ENCODE measurements at regions of chr5 and their contacts with region 1.

Region 1: GRCh38 chr5:172006321-172007174 is at the start of gene FBXW11:
- DNase-seq: peak; percentile 78
- H3K4me3 ChIP-seq: peak within 1 kb of the TSS; percentile 87
- CTCF ChIP-seq: no peak

Region 2: GRCh38 chr5:172028167-172028566 is 21.6 kb after region 1 on chr5:
- CTCF ChIA-PET with region 1: interaction called, 10 read pairs
- POLR2A ChIA-PET with region 1: no interaction called
- DNase-seq: no peak
- H3K4me3 ChIP-seq: no peak overlapping the region
- CTCF ChIP-seq: no peak

Region 3: DNA sequence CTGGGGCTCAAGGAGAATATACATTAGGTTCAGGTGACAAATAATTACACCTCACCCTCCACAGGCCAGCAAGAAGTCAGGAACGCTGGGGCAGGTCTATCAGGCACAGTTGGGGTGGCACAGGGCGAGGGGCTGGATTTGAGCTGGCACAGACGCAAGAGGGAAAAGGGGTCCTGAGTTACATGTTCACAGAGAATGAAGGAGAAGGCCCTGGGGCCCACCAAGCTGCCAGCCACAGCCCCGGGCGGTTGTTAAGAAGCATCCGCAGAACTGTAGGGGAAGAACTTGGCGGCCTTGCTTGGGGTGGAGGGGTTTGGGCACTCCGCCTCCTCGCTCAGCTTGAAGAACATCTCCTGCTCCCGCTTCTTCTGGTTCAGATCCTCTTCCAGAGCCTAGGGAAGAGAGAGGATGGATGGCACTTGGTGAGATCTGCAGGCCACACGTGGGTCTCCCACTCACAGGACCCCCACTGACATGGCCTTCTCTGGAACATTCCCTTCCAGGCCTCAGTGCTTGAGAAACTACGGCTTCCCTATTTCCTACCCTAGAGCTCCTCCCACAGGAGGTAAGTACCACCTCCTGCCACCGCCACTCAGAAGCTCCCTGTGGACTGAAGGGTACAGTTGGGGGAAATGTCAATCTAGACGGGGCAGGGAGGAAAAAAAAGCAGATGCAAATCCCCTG is 38.2 kb after region 1 on chr5:
- CTCF ChIA-PET with region 1: interaction called, 13 read pairs
- POLR2A ChIA-PET with region 1: no interaction called
- DNase-seq: no peak
- H3K4me3 ChIP-seq: no peak overlapping the region
- CTCF ChIP-seq: no peak

Measured in AG04449 (cell line).